IMR-90 (cell line): ENCODE measurements at regions of chr16 and their contacts with region 1.

Region 1: GRCh38 chr16:66588981-66589713 is 9.9 kb downstream of the CMTM2 start:
- DNase-seq: peak; percentile 18
- ATAC-seq: peak; percentile 63; the same call in 1 of the 2 replicates
- H3K4me3 ChIP-seq: no peak overlapping the region
- H3K27ac ChIP-seq: no peak overlapping the region
- H3K4me1 ChIP-seq: no peaks in the 10 kb centered on the region
- H3K27me3 ChIP-seq: peaks cover 24% of the 10 kb centered on the region
- CTCF ChIP-seq: peak; percentile 51
- POLR2A ChIP-seq: no peak
- RAD21 ChIP-seq: peak; percentile 57

Region 2: GRCh38 chr16:66510298-66510697 is 78.8 kb before region 1 on chr16:
- CTCF ChIA-PET with region 1: interaction called, 3 read pairs
- POLR2A ChIA-PET with region 1: interaction called, 10 read pairs
- dilution Hi-C with region 1: no loop called
- in situ Hi-C with region 1: no loop called
- intact Hi-C with region 1: no loop called
- DNase-seq: no peak
- ATAC-seq: no peak
- H3K4me3 ChIP-seq: no peak overlapping the region
- H3K27ac ChIP-seq: no peak overlapping the region
- H3K4me1 ChIP-seq: peaks cover 19% of the 10 kb centered on the region
- H3K27me3 ChIP-seq: no peaks in the 10 kb centered on the region
- CTCF ChIP-seq: no peak
- POLR2A ChIP-seq: no peak
- RAD21 ChIP-seq: no peak